ENCODE measurements at regions of chr1 and their contacts with region 1.

Region 1: GRCh38 chr1:33127001-33127791 is 46.2 kb downstream of the AZIN2 start:
- DNase-seq: peak; percentile 99
- H3K4me3 ChIP-seq: peak overlapping the region; percentile 59
- H3K4me1 ChIP-seq: peaks cover 12% of the 10 kb centered on the region
- H3K27me3 ChIP-seq: no peaks in the 10 kb centered on the region

Region 2: GRCh38 chr1:33624991-33625870 is 498.0 kb after region 1 on chr1:
- in situ Hi-C with region 1: loop called (anchors 25 kb)
- DNase-seq: peak in 1 of 2 experiments; percentile 60
- H3K4me3 ChIP-seq: no peak overlapping the region
- H3K4me1 ChIP-seq: no peaks in the 10 kb centered on the region
- H3K27me3 ChIP-seq: peaks cover 11% of the 10 kb centered on the region; the same call in 1 of the 2 replicates

Measured in HAP-1 (cell line).